ENCODE measurements at regions of chr11 and their contacts with region 1.

Region 1: DNA sequence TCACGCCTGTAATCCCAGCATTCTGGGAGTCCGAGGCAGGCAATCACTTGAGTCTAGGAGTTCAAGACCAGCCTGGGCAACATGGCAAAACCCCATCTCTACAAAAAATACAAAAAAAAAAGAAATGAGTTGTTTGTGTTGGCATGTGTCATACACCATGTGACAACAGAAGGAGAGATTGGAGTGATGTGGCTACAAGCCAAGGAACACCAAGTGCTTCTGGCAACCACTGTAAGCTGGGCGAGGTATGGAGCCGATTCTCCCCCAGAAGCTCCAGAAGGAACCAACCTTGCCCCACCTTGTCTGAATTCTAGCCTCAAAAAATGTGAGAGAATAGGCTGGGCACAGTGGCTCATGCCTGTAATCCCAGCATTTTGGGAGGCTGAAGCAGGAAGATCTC is 39.1 kb upstream of the SLC35C1 start:
- DNase-seq: no peak
- H3K4me3 ChIP-seq: no peak overlapping the region
- H3K27ac ChIP-seq: no peak overlapping the region
- H3K4me1 ChIP-seq: peaks cover 14% of the 10 kb centered on the region
- H3K27me3 ChIP-seq: no peaks in the 10 kb centered on the region
- CTCF ChIP-seq: no peak
- POLR2A ChIP-seq: no peak

Region 2: GRCh38 chr11:45233121-45233803 is 532.6 kb before region 1 on chr11:
- intact Hi-C with region 1: no loop called
- DNase-seq: peak; percentile 77
- H3K4me3 ChIP-seq: no peak overlapping the region
- H3K27ac ChIP-seq: no peak overlapping the region
- H3K4me1 ChIP-seq: no peaks in the 10 kb centered on the region
- H3K27me3 ChIP-seq: no peaks in the 10 kb centered on the region
- CTCF ChIP-seq: peak; percentile 31 to 83 (median 37)
- POLR2A ChIP-seq: no peak

Region 3: GRCh38 chr11:45665206-45665932 is 100.5 kb before region 1 on chr11 and contains the start of gene CHST1:
- intact Hi-C with region 1: loop called (anchors 10 kb)
- DNase-seq: peak; percentile 41
- H3K4me3 ChIP-seq: peak within 1 kb of the TSS; percentile 52 to 64
- H3K27ac ChIP-seq: peak within 1 kb of the TSS in 1 of 2 donors; percentile 66
- H3K4me1 ChIP-seq: peaks cover 4% of the 10 kb centered on the region
- H3K27me3 ChIP-seq: no peaks in the 10 kb centered on the region
- CTCF ChIP-seq: no peak
- POLR2A ChIP-seq: no peak
- total RNA-seq, gene CHST1: 6.2 to 10.6 TPM

Measured in testis (tissue), 5 donors.